SK-N-SH (cell line): ENCODE measurements at regions of chr2 and their contacts with region 1.

Region 1: GRCh38 chr2:216666461-216667233 is 28.7 kb downstream of the IGFBP5 start:
- DNase-seq: peak; percentile 79
- H3K4me3 ChIP-seq: no peak overlapping the region; a peak in 1 of 4 replicates
- H3K27ac ChIP-seq: no peak overlapping the region; a peak in 1 of 4 replicates
- H3K4me1 ChIP-seq: peaks cover 14 to 23% of the 10 kb centered on the region in 2 experiments; a peak in 3 of 4 replicates
- H3K27me3 ChIP-seq: no peaks in the 10 kb centered on the region
- CTCF ChIP-seq: peak; percentile 98
- EP300 ChIP-seq: no peak
- RAD21 ChIP-seq: peak; percentile 100

Region 2: DNA sequence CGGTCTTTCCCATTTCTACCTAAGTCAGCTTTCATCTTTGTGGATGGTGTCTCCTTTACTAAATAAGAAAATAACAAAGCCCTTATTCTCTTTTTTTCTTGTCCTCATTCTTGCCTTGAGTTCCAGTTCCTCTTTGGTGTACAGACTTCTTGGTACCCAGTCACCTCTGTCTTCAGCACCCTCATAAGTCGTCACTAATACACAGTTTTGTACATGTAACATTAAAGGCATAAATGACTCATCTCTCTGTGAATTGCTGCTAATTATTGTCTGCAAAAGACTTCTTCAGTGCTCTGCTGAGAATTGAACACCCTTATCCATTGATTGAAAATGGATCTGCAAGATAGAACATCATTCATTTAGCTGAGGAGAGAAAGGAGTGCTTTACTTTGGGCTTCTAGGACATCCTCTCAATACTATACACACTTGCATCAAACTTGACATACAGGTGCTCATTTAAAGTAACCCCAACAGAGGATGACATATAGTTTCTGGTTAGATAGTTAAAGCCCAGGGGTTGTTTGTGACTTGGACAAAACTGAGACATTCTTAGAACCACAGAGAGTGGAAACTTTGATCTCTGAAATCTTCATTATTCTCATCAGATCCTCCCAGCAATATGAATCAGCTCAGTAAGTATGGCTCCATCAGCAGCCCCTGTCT is 460.5 kb before region 1 on chr2:
- CTCF ChIA-PET with region 1: no interaction called
- POLR2A ChIA-PET with region 1: no interaction called
- DNase-seq: no peak
- H3K4me3 ChIP-seq: no peak overlapping the region
- H3K27ac ChIP-seq: no peak overlapping the region; a peak in 1 of 4 replicates
- H3K4me1 ChIP-seq: peaks cover 1 to 32% of the 10 kb centered on the region in 2 experiments; a peak in 3 of 4 replicates
- H3K27me3 ChIP-seq: no peaks in the 10 kb centered on the region
- CTCF ChIP-seq: no peak
- EP300 ChIP-seq: no peak
- RAD21 ChIP-seq: no peak

Region 3: GRCh38 chr2:216507220-216508160 is 159.2 kb before region 1 on chr2:
- CTCF ChIA-PET with region 1: interaction called, 28 read pairs
- POLR2A ChIA-PET with region 1: interaction called, 4 read pairs
- DNase-seq: no peak
- H3K4me3 ChIP-seq: no peak overlapping the region
- H3K27ac ChIP-seq: no peak overlapping the region; a peak in 1 of 4 replicates
- H3K4me1 ChIP-seq: peaks cover 7 to 14% of the 10 kb centered on the region in 2 experiments; a peak in 2 of 4 replicates
- H3K27me3 ChIP-seq: no peaks in the 10 kb centered on the region
- CTCF ChIP-seq: no peak
- EP300 ChIP-seq: no peak
- RAD21 ChIP-seq: no peak

Region 4: GRCh38 chr2:216535454-216535995 is 131.1 kb before region 1 on chr2:
- CTCF ChIA-PET with region 1: interaction called, 21 read pairs
- POLR2A ChIA-PET with region 1: no interaction called
- DNase-seq: no peak
- H3K4me3 ChIP-seq: no peak overlapping the region
- H3K27ac ChIP-seq: peak overlapping the region; percentile 77 to 89
- H3K4me1 ChIP-seq: peaks cover 40 to 41% of the 10 kb centered on the region in 2 experiments
- H3K27me3 ChIP-seq: no peaks in the 10 kb centered on the region
- CTCF ChIP-seq: no peak
- EP300 ChIP-seq: peak in 1 of 2 experiments; percentile 50; a peak in 1 of 4 replicates
- RAD21 ChIP-seq: no peak

Region 5: GRCh38 chr2:216596236-216596979 is 70.2 kb before region 1 on chr2:
- CTCF ChIA-PET with region 1: interaction called, 11 read pairs
- POLR2A ChIA-PET with region 1: no interaction called
- DNase-seq: peak; percentile 69
- H3K4me3 ChIP-seq: peak overlapping the region in 1 of 2 experiments; percentile 5; a peak in 1 of 4 replicates
- H3K27ac ChIP-seq: peak overlapping the region; percentile 61 to 95
- H3K4me1 ChIP-seq: peaks cover 21 to 27% of the 10 kb centered on the region in 2 experiments
- H3K27me3 ChIP-seq: no peaks in the 10 kb centered on the region
- CTCF ChIP-seq: no peak
- EP300 ChIP-seq: peak; percentile 60 to 79; a peak in 3 of 4 replicates
- RAD21 ChIP-seq: peak; percentile 27

Region 6: GRCh38 chr2:216643986-216644659 is 22.5 kb before region 1 on chr2:
- CTCF ChIA-PET with region 1: interaction called, 76 read pairs
- POLR2A ChIA-PET with region 1: no interaction called
- DNase-seq: no peak
- H3K4me3 ChIP-seq: no peak overlapping the region
- H3K27ac ChIP-seq: peak overlapping the region; percentile 36 to 71; a peak in 3 of 4 replicates
- H3K4me1 ChIP-seq: peaks cover 20 to 26% of the 10 kb centered on the region in 2 experiments
- H3K27me3 ChIP-seq: no peaks in the 10 kb centered on the region
- CTCF ChIP-seq: no peak
- EP300 ChIP-seq: peak in 1 of 2 experiments; percentile 62; a peak in 1 of 4 replicates
- RAD21 ChIP-seq: no peak

Region 7: DNA sequence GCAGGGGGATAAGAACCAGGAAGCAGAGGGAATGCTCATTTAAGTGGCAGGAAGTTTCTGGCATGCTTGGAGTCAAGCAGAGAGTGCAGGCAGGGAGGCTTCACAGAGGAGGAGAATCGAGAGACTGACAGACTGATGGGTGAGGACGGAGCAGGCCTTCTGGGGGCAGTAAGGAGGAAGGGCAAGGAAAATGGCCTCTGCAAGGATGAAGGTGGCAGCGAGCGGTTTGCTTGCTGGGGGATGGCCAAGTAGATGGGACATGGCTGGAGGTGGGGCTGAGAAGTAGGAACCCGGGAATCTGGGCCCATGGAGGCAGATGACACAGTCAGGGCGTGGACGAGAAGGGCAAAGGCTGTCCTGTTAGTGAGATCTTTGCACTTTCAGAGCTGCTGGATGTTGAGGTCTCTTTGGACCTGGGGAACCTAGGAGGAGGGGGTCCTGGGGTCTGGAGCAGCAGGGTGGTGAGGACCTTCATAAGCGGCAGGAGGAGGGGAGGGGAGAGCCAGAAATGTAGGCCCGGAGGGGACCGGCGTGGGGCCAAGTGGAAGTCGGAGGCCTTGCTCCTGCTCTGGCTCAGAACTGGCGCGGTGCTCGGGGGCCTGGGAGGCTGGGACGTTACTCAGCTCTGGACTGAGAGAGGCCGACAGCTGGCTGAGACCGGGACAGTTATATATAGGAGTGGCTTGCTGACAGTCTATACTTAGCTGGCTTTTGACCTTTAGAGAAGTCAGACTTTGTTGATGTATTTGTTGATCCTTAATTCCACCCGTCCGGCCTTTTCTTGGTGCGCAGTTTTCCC is 12.8 kb after region 1 on chr2:
- CTCF ChIA-PET with region 1: interaction called, 13 read pairs
- POLR2A ChIA-PET with region 1: interaction called, 3 read pairs
- DNase-seq: no peak
- H3K4me3 ChIP-seq: no peak overlapping the region
- H3K27ac ChIP-seq: no peak overlapping the region
- H3K4me1 ChIP-seq: peaks cover 6 to 8% of the 10 kb centered on the region in 2 experiments; a peak in 2 of 4 replicates
- H3K27me3 ChIP-seq: no peaks in the 10 kb centered on the region
- CTCF ChIP-seq: no peak
- EP300 ChIP-seq: no peak
- RAD21 ChIP-seq: no peak

Region 8: DNA sequence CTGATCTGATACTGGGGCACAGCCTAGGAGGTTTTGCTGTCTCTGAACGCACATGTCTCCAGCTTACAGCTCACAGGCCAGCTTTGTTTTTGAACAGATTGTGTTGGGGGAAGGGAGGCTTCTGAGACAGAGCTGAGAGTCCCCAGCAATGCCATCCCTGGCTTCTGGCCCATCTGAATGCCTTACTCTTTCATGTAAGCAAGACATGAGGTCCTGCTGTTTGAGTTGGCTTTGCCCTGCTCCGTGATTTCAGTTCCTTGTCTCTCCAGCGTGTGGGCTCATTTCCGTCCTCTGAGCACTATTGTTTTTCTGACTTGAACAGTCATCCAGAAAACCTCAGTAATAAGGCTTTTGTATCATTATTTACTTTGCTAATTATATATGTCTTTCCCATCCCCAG is 388.1 kb after region 1 on chr2:
- CTCF ChIA-PET with region 1: no interaction called
- POLR2A ChIA-PET with region 1: no interaction called
- DNase-seq: no peak
- H3K4me3 ChIP-seq: no peak overlapping the region
- H3K27ac ChIP-seq: peak overlapping the region in 1 of 2 experiments; percentile 32; a peak in 1 of 4 replicates
- H3K4me1 ChIP-seq: peaks cover 0 to 2% of the 10 kb centered on the region in 2 experiments; a peak in 1 of 4 replicates
- H3K27me3 ChIP-seq: no peaks in the 10 kb centered on the region
- CTCF ChIP-seq: no peak
- EP300 ChIP-seq: no peak
- RAD21 ChIP-seq: no peak

Region 9: DNA sequence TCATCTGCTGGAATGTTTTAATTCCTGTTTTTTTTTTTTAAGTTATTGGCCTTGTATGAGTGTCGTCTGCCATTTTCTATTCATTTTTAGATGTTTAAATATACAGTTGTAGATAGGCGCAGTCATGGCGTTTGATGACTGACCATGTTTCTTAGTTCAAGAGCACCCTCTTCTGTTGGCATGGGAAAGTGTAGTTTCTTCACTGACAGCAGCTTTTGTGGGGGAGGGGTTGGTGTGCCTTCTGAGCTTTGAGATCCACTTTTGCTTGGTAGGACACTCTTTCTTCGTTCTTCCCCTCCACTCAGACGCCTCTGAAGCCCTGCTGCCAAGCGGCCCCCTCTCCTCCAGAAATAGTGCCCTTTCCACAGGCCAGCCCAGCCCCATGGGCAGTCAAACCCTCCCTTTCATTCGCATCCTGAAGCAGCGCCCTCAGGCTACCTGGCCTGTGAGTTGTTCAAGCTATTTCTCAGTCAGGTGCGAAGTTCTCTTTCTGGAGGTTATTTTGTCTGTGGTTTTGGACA is 844.2 kb after region 1 on chr2:
- CTCF ChIA-PET with region 1: interaction called, 11 read pairs
- POLR2A ChIA-PET with region 1: no interaction called
- DNase-seq: peak; percentile 78
- H3K4me3 ChIP-seq: no peak overlapping the region; a peak in 1 of 4 replicates
- H3K27ac ChIP-seq: peak overlapping the region in 1 of 2 experiments; percentile 48; a peak in 1 of 4 replicates
- H3K4me1 ChIP-seq: peaks cover 8 to 11% of the 10 kb centered on the region in 2 experiments; a peak in 3 of 4 replicates
- H3K27me3 ChIP-seq: no peaks in the 10 kb centered on the region
- CTCF ChIP-seq: peak; percentile 77
- EP300 ChIP-seq: no peak
- RAD21 ChIP-seq: peak; percentile 99